Calu3 (cell line): ENCODE measurements at regions of chr20 and their contacts with region 1.

Region 1: DNA sequence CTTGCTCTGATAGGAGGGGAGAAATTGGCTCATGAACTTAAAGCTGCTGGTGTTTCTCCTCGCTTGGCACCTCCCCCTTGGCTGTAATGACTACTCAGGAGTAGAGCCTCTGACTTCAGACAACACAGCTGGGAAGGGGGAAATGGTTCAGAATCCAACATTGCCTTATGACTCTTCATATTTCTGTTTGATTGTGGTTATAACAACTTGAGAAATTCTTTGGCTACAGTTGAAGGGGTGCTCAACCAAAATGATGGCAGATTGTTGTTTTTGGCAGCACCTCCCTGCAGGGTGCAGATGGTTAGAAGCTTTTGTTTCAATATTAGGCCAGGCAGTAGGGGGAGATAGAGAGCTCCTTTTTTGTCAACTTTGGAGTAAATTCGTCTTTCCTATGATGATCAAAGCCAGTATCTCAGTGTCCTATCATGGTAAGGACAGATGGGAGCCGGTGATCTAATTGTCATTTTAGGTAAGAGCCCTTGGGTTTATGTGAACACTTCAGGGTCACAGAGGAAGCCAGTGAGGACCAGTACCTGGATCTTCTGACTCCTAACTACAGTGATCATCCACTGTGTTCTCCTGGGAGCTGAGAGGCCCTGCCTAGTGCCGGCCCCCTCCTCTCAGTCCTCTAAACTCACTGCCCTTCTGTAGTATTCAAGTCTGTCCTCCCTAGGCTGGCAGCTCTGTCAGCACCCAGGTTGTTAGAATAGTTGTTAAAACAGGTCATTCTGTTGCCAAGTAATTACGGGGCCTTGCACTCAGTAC is 39.9 kb downstream of the RPRD1B start:
- DNase-seq: peak; percentile 77
- H3K4me3 Mint-ChIP-seq: no peak overlapping the region
- H3K27ac Mint-ChIP-seq: no peak overlapping the region
- H3K4me1 Mint-ChIP-seq: peaks cover 26% of the 10 kb centered on the region
- H3K27me3 Mint-ChIP-seq: no peaks in the 10 kb centered on the region
- CTCF ChIP-seq: peak; percentile 92

Region 2: DNA sequence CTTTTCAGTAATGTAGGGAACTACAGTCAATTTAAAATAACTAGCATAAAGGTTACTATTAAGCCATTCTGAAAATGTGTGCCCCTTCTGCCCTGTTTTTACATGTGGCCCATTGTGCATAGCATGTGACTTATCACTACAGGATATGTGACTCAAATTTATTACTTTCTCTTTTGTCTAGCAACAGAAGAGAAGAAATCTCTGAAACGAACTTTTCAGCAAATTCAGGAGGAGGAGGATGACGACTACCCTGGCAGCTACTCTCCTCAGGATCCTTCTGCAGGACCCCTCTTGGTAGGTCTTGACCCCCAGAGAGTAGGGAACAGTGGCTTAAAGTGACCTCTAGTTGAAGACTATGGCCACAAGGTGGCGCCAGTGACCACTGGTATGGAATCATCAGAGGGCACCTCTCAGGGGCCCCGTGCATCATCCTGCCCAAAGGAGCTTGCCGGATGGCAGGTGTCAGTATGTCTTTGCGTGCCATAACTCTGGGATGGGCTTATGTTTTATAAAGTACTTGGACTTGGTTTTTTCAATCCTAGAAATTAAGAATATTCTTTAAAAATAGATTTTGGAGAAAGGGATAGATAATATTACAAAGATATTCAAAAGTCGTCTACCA is 16.0 kb before region 1 on chr20:
- CTCF ChIA-PET with region 1: interaction called, 17 read pairs
- intact Hi-C with region 1: loop called (anchors 1 kb)
- DNase-seq: peak; percentile 91
- H3K4me3 Mint-ChIP-seq: no peak overlapping the region
- H3K27ac Mint-ChIP-seq: no peak overlapping the region
- H3K4me1 Mint-ChIP-seq: no peaks in the 10 kb centered on the region
- H3K27me3 Mint-ChIP-seq: no peaks in the 10 kb centered on the region
- CTCF ChIP-seq: peak; percentile 97

Region 3: DNA sequence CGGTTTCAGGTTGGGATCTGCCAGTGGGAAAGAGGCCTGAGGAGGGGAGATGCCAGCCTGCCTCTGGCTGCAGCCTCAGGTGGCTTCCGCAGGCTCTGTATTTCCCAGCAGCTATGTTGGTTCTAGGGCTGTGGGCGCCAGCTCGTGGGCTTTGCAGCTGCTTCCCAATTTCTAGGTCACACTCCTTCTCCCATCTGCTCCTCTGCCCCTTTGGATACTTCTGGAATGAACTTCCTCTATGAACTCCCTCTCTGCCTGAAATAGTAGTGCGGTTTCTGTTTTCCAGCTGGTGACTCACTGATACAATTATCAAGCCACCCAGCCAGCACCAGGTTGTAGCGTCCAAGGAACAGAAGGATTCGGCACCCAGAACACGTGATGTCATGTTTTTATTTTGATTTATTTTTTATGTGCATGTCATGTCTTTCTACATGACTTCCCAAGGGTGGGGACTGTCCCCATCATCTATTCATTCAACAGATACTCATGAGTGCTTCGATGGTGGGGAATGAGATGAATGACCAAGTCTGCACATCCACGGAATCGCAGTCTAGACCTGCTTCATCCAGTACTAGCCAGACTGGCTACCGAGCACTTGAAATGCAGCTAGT is 53.6 kb after region 1 on chr20:
- CTCF ChIA-PET with region 1: interaction called, 13 read pairs
- intact Hi-C with region 1: no loop called
- DNase-seq: peak; percentile 64
- H3K4me3 Mint-ChIP-seq: peak overlapping the region; percentile 13
- H3K27ac Mint-ChIP-seq: peak overlapping the region; percentile 40
- H3K4me1 Mint-ChIP-seq: peaks cover 55% of the 10 kb centered on the region
- H3K27me3 Mint-ChIP-seq: no peaks in the 10 kb centered on the region
- CTCF ChIP-seq: no peak

Region 4: GRCh38 chr20:38143646-38144554 is 70.4 kb after region 1 on chr20:
- CTCF ChIA-PET with region 1: interaction called, 10 read pairs
- intact Hi-C with region 1: no loop called
- DNase-seq: peak; percentile 90
- H3K4me3 Mint-ChIP-seq: peak overlapping the region; percentile 20
- H3K27ac Mint-ChIP-seq: peak overlapping the region; percentile 94
- H3K4me1 Mint-ChIP-seq: peaks cover 80% of the 10 kb centered on the region
- H3K27me3 Mint-ChIP-seq: no peaks in the 10 kb centered on the region
- CTCF ChIP-seq: no peak

Region 5: DNA sequence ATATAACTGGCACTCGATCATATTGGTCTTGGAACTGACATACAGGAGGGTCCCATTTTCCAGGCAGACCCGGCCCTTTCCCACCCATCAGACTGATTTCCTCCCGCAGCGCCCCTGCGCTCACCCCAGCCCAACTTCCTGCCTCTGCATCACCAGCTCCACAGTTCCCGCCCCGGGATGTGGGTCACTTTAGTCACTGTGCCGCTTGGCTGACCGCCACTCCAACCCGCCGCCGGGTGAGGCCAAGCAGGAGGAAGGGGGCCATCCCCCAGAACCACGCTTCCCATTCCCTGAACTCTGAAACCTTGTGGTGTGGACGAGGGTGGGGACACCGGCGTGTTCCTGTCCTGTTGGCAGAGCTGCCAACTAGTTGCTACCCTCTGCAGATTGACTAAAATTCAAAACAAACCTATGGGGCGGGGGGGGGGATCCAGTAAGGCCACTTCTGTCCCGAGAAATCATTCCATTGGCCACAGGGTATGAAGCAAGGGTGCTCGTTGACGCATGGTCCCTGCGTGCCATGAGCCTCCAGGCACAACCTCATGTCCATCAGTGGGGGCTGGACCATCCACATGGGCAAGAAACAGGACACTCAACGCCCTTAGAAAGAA is 79.2 kb after region 1 on chr20:
- CTCF ChIA-PET with region 1: interaction called, 14 read pairs
- intact Hi-C with region 1: no loop called
- DNase-seq: peak; percentile 98
- H3K4me3 Mint-ChIP-seq: peak overlapping the region; percentile 61
- H3K27ac Mint-ChIP-seq: peak overlapping the region; percentile 88
- H3K4me1 Mint-ChIP-seq: peaks cover 68% of the 10 kb centered on the region
- H3K27me3 Mint-ChIP-seq: no peaks in the 10 kb centered on the region
- CTCF ChIP-seq: no peak

Region 6: DNA sequence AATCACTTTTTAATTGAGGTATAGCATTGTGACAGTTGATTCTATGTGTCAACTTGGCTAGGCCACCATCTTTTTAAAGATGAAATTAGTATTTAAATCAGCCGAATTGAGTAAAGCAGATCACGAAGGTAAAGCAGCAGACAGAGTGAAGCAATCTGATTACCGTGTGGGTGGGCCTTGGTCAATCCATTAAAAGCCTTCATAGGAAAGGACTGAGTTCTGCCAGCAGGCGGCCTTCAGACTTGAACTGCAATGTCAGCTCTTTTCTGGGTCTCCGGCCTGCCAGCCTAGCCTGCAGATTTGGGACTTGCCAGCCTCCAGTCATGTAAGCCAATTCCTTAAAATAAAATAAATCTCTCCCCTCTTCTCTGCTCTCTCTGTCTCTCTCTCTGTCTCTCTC is 114.0 kb after region 1 on chr20:
- CTCF ChIA-PET with region 1: no interaction called
- intact Hi-C with region 1: no loop called
- DNase-seq: no peak
- H3K4me3 Mint-ChIP-seq: no peak overlapping the region
- H3K27ac Mint-ChIP-seq: peak overlapping the region; percentile 44
- H3K4me1 Mint-ChIP-seq: peaks cover 33% of the 10 kb centered on the region
- H3K27me3 Mint-ChIP-seq: no peaks in the 10 kb centered on the region
- CTCF ChIP-seq: no peak

Region 7: DNA sequence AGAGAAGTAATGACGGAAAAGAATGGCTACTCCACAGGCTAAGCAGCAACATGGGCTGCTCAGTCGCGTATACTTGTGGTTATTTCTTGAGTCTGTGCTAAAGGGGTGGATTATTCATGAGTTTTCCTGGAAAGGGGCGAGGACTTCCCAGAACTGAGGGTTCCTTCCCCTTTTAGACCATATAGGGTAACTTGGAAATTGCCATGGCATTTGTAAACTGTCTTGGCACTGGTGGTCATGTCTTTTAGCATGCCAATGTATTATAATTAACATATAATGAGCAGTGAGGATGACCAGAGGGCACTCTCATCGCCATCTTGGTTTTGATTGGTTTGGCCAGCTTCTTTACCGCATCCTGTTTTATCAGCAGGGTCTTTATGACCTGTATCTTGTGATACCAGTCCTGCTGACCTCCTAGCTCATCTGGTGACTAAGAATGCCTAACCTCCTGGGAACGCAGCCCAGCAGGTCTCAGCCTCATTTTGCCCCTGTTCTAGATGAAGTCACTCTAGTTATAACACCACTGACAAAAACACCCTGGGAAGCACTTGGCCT is 284.2 kb after region 1 on chr20:
- CTCF ChIA-PET with region 1: no interaction called
- intact Hi-C with region 1: no loop called
- DNase-seq: no peak
- H3K4me3 Mint-ChIP-seq: no peak overlapping the region
- H3K27ac Mint-ChIP-seq: no peak overlapping the region
- H3K4me1 Mint-ChIP-seq: no peaks in the 10 kb centered on the region
- H3K27me3 Mint-ChIP-seq: peaks cover 40% of the 10 kb centered on the region
- CTCF ChIP-seq: no peak

Region 8: GRCh38 chr20:38412877-38413577 is 339.5 kb after region 1 on chr20:
- CTCF ChIA-PET with region 1: interaction called, 10 read pairs
- intact Hi-C with region 1: no loop called
- DNase-seq: no peak
- H3K4me3 Mint-ChIP-seq: no peak overlapping the region
- H3K27ac Mint-ChIP-seq: no peak overlapping the region
- H3K4me1 Mint-ChIP-seq: peaks cover 5% of the 10 kb centered on the region
- H3K27me3 Mint-ChIP-seq: no peaks in the 10 kb centered on the region
- CTCF ChIP-seq: no peak

Region 9: GRCh38 chr20:38900606-38901005 is 827.1 kb after region 1 on chr20:
- CTCF ChIA-PET with region 1: no interaction called
- intact Hi-C with region 1: no loop called
- DNase-seq: no peak
- H3K4me3 Mint-ChIP-seq: no peak overlapping the region
- H3K27ac Mint-ChIP-seq: no peak overlapping the region
- H3K4me1 Mint-ChIP-seq: no peaks in the 10 kb centered on the region
- H3K27me3 Mint-ChIP-seq: peaks cover 85% of the 10 kb centered on the region
- CTCF ChIP-seq: no peak

Region 10: GRCh38 chr20:39025883-39026282 is 952.4 kb after region 1 on chr20:
- CTCF ChIA-PET with region 1: no interaction called
- intact Hi-C with region 1: no loop called
- DNase-seq: no peak
- H3K4me3 Mint-ChIP-seq: no peak overlapping the region
- H3K27ac Mint-ChIP-seq: no peak overlapping the region
- H3K4me1 Mint-ChIP-seq: no peaks in the 10 kb centered on the region
- H3K27me3 Mint-ChIP-seq: no peaks in the 10 kb centered on the region
- CTCF ChIP-seq: no peak